HEK293 (cell line): ENCODE measurements at regions of chr3 and their contacts with region 1.

Region 1: DNA sequence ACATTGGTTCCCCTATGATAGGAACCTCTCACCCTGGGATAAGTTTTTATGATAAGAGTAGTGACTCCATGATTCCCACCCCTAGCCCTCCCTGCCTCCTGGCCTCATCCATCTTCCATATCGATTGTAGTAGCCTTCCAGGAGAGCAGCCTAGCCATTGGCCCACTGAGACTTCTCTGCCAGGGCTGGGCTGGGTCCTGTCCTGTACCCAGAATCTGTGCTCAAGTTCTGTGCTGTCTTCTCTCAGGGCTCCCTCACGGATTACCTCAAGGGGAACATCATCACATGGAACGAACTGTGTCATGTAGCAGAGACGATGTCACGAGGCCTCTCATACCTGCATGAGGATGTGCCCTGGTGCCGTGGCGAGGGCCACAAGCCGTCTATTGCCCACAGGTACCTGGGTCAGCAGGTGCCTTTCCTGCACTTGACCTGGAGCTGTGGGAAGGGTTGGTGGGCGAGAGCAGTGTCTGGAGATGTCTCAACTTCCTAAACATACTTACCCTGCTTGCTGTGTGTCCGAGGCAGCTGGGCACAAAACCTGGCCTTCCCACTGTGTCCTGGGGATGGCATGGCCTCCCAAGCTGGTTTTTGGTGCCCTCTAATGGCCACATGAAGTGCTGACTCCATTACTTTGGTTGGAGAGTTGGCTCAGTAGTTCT is 16.6 kb upstream of the EXOG start:
- H3K4me3 ChIP-seq: no peak overlapping the region
- H3K27ac ChIP-seq: no peak overlapping the region
- H3K4me1 ChIP-seq: no peaks in the 10 kb centered on the region
- CTCF ChIP-seq: no peak

Region 2: DNA sequence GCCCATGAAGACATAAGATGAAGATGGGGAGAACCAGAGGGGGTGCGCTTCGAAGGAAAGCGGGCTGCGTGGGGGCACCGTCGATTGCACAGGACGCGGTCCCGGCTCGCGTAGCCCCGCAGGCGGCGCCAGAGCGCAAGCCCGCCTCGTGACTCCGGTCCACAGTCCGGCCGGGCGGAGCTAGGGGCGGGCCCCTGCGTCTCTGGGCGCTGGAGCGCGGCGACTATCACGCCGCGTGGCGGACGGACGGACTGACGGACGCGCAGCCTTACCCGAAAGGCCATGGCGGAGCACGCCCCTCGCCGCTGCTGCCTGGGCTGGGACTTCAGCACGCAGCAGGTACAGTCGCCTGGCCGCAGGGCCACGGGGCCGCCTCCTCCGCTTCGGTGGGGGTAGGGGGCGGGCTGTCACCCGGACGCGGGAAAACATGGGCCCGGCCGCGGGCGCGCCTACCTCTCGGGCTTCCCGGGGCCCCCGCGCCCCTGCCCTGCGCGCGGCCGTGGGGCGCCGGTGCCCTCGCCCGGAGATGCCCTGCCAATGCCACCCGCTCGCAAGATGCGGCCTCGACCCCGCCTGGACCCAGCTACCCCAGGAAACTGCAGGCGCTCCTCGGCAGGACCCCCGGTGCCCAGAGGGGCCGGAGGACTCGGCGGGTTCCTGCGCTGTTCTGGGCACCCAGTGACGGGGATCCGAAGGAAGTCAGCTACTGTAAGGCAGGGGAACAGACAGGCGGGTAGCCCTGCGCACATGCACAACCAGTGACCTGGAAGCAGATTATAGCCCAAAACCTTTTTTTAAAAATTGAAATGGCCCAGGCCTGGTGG is 132.8 kb before region 1 on chr3 and contains the start of gene XYLB:
- CTCF ChIA-PET with region 1: interaction called, 11 read pairs
- POLR2A ChIA-PET with region 1: interaction called, 3 read pairs
- H3K4me3 ChIP-seq: peak within 1 kb of the TSS; percentile 59
- H3K27ac ChIP-seq: peak within 1 kb of the TSS; percentile 13; the same call in 1 of the 2 replicates
- H3K4me1 ChIP-seq: no peaks in the 10 kb centered on the region
- CTCF ChIP-seq: peak; percentile 89